ENCODE measurements at regions of chr7 and their contacts with region 1.

Region 1: GRCh38 chr7:127983804-127984332 is 47.4 kb downstream of the LRRC4 start:
- DNase-seq: peak; percentile 8 to 59
- H3K4me3 ChIP-seq: no peak overlapping the region
- H3K27ac ChIP-seq: no peak overlapping the region
- H3K4me1 ChIP-seq: peaks cover 7% of the 10 kb centered on the region
- H3K27me3 ChIP-seq: no peaks in the 10 kb centered on the region
- CTCF ChIP-seq: no peak

Region 2: DNA sequence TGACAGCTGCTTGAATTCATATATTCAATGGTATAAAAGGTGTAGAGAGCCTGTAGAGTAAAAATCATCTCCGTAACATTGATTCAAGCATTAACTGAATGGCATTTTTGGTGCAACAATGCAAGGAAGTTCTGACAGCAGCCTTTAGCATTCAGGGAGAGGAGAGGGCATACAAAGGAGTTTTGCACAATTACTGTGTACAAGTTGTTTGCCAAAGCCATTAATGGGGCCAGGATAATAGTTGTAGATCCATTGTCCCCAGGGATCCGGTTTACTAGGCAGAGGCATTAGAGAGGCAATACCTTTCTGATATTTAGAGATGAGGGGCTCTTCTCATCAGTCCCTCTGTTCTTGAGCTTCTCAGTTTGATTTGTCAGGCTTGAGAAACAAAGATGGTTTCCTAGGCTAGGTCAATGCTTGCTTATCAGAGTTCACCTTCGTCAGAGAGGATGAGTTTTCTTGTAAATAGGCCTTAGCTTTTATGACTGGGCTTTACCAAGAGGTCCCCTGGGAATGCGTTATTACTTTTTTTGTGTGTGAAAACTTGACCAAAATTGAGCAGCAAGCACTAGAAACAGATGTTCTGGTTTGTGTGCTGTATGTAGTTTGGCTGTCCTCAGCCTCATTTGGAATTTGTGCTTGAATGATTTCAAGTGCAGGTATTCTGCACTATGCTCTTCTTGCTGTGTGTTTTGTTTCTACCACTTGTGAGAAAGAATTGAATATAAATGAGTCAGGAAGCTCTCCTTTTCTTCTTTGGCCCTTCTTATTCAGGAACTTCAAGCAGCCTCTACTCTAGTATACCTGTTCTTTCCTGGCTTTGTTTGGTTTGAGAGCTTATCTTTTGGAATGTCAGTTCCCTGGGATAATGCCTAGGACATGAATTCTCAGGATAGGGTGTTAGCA is 299.8 kb before region 1 on chr7:
- CTCF ChIA-PET with region 1: no interaction called
- POLR2A ChIA-PET with region 1: no interaction called
- intact Hi-C with region 1: no loop called
- DNase-seq: no peak
- H3K4me3 ChIP-seq: no peak overlapping the region
- H3K27ac ChIP-seq: no peak overlapping the region
- H3K4me1 ChIP-seq: no peaks in the 10 kb centered on the region
- H3K27me3 ChIP-seq: no peaks in the 10 kb centered on the region
- CTCF ChIP-seq: no peak

Region 3: DNA sequence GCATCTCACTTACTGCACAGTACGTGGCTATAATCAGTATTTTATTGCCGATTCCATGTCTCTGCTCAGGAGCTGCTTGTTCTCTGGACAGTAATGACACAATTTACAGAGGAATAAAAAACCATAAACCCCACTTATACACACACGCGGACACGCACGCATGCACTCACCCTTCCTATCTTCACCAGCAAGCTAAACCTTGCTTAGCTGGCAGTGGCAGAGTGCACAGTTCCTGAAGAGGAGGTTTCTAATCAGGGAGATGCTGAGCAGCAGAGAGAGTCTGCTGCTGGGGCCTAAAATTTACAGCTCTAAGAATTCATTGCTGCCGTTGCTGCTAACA is 265.6 kb before region 1 on chr7:
- CTCF ChIA-PET with region 1: no interaction called
- POLR2A ChIA-PET with region 1: no interaction called
- intact Hi-C with region 1: no loop called
- DNase-seq: no peak
- H3K4me3 ChIP-seq: no peak overlapping the region
- H3K27ac ChIP-seq: no peak overlapping the region
- H3K4me1 ChIP-seq: no peaks in the 10 kb centered on the region
- H3K27me3 ChIP-seq: no peaks in the 10 kb centered on the region
- CTCF ChIP-seq: no peak

Region 4: DNA sequence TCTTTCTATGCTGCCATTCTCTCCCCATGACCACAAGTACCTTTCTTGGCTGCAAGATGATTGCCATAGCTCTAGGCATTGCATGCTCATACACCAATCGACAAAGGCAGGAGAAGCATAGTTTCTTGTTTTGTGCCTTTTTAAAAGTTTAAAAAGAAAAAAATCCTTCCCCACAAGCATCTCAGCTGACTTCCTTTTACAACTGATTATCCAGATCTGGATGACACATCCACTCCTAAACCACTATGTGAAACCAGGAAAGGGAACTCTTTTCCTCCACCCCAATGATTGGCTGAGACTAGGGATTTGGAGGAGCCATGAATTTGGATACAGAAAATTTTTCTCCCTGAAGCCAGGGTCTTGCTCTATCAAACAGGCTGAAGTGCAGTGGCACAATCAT is 61.9 kb after region 1 on chr7:
- CTCF ChIA-PET with region 1: no interaction called
- POLR2A ChIA-PET with region 1: interaction called, 4 read pairs
- intact Hi-C with region 1: loop called (anchors 5 kb)
- DNase-seq: no peak
- H3K4me3 ChIP-seq: no peak overlapping the region
- H3K27ac ChIP-seq: no peak overlapping the region
- H3K4me1 ChIP-seq: no peaks in the 10 kb centered on the region
- H3K27me3 ChIP-seq: no peaks in the 10 kb centered on the region
- CTCF ChIP-seq: no peak